ENCODE measurements at regions of chr3 and their contacts with region 1.

Region 1: GRCh38 chr3:113495035-113495434 is 19.9 kb downstream of the SPICE1 start:
- DNase-seq: peak; percentile 64
- H3K4me3 Mint-ChIP-seq: no peak overlapping the region
- H3K27ac Mint-ChIP-seq: no peak overlapping the region
- H3K4me1 Mint-ChIP-seq: peaks cover 2% of the 10 kb centered on the region
- H3K27me3 Mint-ChIP-seq: no peaks in the 10 kb centered on the region

Region 2: GRCh38 chr3:113304856-113305540 is 190.0 kb before region 1 on chr3:
- CTCF ChIA-PET with region 1: no interaction called
- DNase-seq: no peak
- H3K4me3 Mint-ChIP-seq: no peak overlapping the region
- H3K27ac Mint-ChIP-seq: no peak overlapping the region
- H3K4me1 Mint-ChIP-seq: no peaks in the 10 kb centered on the region
- H3K27me3 Mint-ChIP-seq: no peaks in the 10 kb centered on the region

Region 3: GRCh38 chr3:113514265-113514769 is 19.3 kb after region 1 on chr3:
- CTCF ChIA-PET with region 1: interaction called, 29 read pairs
- DNase-seq: no peak
- H3K4me3 Mint-ChIP-seq: no peak overlapping the region
- H3K27ac Mint-ChIP-seq: no peak overlapping the region
- H3K4me1 Mint-ChIP-seq: peaks cover 19% of the 10 kb centered on the region
- H3K27me3 Mint-ChIP-seq: peaks cover 19% of the 10 kb centered on the region

Region 4: DNA sequence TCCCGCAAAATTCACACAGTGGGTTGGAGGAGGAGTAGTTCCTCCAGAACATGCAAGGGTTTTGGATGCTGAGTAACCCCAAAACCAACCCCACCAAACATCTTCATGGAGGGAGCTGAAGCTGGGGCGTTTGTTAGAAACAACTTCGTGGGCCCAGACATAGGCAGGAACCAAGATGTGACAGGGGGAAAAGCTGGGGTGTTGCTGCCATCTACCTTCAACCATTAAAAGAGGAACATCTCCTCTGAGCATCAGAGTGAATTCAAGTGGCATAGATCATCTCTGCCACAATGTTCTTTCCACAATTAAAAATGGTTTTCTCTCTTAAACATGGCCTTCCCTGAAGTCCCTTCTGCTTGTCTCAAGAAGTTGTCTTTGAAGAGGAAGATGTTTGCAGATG is 57.8 kb after region 1 on chr3:
- CTCF ChIA-PET with region 1: interaction called, 21 read pairs
- DNase-seq: peak; percentile 49
- H3K4me3 Mint-ChIP-seq: no peak overlapping the region
- H3K27ac Mint-ChIP-seq: no peak overlapping the region
- H3K4me1 Mint-ChIP-seq: no peaks in the 10 kb centered on the region
- H3K27me3 Mint-ChIP-seq: no peaks in the 10 kb centered on the region

Region 5: DNA sequence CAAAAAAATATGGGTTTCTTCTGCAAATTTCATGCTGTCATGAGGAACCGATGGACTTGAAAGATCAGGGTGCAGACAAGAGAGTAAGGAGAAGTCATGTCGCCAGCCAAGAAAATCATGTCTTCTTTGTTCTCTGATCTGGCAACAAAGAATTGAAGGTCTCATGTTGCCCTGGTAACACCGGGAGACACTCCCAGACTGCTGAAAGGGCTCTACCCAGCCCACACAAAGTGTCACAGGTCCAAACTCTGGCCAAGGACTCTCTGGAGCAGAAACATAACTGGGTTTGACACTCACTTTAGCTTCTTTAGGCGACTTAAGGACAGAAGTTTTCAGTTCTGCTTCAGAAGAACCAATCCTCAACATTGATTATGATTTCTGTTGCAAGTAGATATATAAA is 80.2 kb after region 1 on chr3:
- CTCF ChIA-PET with region 1: interaction called, 69 read pairs
- DNase-seq: no peak
- H3K4me3 Mint-ChIP-seq: no peak overlapping the region
- H3K27ac Mint-ChIP-seq: no peak overlapping the region
- H3K4me1 Mint-ChIP-seq: peaks cover 3% of the 10 kb centered on the region
- H3K27me3 Mint-ChIP-seq: no peaks in the 10 kb centered on the region

Region 6: DNA sequence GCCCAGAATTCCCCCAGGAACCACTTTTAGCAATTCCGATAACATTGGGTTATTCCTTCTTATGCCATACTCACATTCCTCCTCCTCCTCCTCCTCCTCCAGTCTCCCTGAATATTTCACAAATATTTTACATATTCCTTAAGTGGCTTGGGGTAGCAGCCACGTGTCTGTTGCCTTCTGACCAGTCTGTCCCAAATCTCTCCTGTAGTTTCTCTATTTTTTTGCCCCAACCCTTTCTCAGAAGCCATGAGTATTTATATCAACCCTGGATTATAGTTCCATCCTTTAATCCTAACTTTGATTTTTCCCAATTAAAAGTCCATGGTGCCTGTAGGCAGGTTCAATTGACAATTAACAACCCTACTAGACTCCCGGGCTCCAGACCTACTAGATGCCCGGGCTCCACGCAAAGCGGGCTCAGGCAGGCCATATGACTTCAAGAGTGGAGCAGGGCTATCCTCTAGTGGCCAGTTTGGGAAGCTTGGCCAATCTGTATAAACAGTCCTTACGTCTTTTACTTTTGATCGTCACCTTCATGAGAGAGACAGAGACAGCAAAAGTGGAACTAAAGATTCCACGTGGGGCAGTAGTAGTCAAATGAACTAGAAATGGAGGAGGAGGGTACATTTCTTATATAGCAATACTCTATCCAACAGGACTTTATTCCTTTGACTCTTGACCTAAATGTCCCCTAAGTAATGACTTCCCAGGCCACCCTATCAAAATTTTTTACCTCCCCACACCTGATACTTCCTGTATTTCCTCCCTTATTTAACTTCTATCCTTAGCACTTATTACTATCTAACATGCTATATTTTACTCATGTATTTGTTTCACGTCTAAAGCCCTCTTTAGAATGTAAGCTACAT is 131.7 kb after region 1 on chr3:
- CTCF ChIA-PET with region 1: interaction called, 12 read pairs
- DNase-seq: peak; percentile 36
- H3K4me3 Mint-ChIP-seq: no peak overlapping the region
- H3K27ac Mint-ChIP-seq: no peak overlapping the region
- H3K4me1 Mint-ChIP-seq: peaks cover 6% of the 10 kb centered on the region
- H3K27me3 Mint-ChIP-seq: no peaks in the 10 kb centered on the region

Region 7: GRCh38 chr3:113745273-113746068 is 250.4 kb after region 1 on chr3:
- CTCF ChIA-PET with region 1: interaction called, 12 read pairs
- DNase-seq: peak; percentile 83
- H3K4me3 Mint-ChIP-seq: peak overlapping the region; percentile 97
- H3K27ac Mint-ChIP-seq: peak overlapping the region; percentile 100
- H3K4me1 Mint-ChIP-seq: peaks cover 66% of the 10 kb centered on the region
- H3K27me3 Mint-ChIP-seq: no peaks in the 10 kb centered on the region

Measured in activated naive CD4-positive, alpha-beta T cell treated with anti-CD3 and anti-CD28 coated beads, Interleukin-2, amount 10 ng/mL, durations not matched to agents 7 days and 5 days (primary cell).